ENCODE measurements at regions of chr16 and their contacts with region 1.

Region 1: DNA sequence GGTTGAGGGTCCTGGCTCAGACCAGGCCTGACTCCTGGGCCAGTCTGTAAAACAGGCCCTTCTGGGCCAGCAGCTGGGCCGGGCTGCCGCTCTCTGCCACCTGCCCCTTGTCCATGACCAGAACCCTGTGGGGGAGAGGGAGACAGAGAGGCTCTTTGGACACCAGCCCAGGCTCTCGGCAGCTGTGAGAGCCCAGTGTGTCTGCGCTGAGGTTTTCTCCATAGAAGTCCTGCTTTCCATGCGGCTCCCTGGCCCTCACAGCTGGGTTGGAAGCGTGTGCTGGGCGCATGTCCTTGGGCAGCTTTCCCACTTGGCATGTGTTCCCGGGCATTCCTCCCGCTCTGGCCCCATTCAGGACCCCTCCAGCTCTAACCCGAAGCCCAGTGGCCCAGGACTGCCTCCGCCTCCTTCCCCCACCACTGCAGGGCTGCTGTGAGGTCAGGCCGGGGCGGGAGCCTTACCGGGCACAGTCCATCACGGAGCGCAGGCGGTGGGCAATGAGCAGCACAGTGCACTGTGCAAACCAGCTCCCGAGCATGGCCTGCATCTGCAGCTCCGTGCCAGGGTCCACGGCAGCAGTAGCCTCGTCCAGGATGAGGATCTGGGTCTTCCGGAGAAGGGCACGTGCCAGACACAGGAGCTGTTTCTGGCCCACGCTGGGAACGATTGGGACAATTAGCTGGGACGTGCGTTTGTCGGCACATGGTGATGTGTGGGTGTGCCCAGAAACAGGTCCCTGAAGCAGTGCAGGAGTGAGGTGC is 73.0 kb downstream of the ABCC6 start:
- DNase-seq: peak; percentile 76 to 84
- ATAC-seq: peak; percentile 81
- H3K4me3 ChIP-seq: no peak overlapping the region
- H3K27ac ChIP-seq: no peak overlapping the region
- H3K4me1 ChIP-seq: no peaks in the 10 kb centered on the region
- H3K27me3 ChIP-seq: no peaks in the 10 kb centered on the region

Region 2: GRCh38 chr16:16096121-16096857 is 54.0 kb before region 1 on chr16:
- intact Hi-C with region 1: loop called in 1 of 2 experiments (anchors 10 kb)
- DNase-seq: peak; percentile 77 to 87
- ATAC-seq: peak; percentile 74
- H3K4me3 ChIP-seq: no peak overlapping the region
- H3K27ac ChIP-seq: peak overlapping the region in 1 of 2 donors; percentile 85
- H3K4me1 ChIP-seq: peaks cover 0 to 5% of the 10 kb centered on the region in 2 donors
- H3K27me3 ChIP-seq: no peaks in the 10 kb centered on the region

Region 3: DNA sequence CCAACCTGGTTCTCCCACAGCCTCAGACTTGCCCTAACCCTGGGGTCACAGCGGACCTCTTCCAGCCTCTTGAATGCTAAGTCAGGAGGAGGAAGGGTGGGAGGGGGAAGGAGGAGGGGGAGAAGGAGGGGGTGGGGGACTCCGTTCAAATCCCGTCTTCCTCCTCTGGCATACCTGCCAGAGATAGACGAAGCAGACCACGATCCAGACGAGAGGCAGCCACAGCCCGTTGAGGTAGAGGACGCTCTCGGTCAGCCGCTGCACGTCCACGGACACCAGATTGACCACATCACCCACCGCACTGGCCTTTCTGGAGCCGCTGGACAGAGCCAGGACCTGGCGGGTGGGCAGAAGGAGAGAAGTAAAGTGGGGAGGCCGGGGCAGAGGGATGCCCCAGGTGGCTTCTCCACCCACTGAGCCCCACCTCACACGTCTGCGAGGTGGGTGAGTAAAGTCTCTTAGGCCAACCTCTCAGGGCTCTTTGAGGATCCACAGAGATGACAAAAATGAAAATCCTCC is 47.6 kb after region 1 on chr16:
- intact Hi-C with region 1: no loop called
- DNase-seq: peak in 1 of 2 donors; percentile 61
- ATAC-seq: no peak
- H3K4me3 ChIP-seq: no peak overlapping the region
- H3K27ac ChIP-seq: no peak overlapping the region
- H3K4me1 ChIP-seq: no peaks in the 10 kb centered on the region
- H3K27me3 ChIP-seq: no peaks in the 10 kb centered on the region

Measured in aorta (tissue), 5 donors.